SK-N-SH (cell line): ENCODE measurements at regions of chr7 and their contacts with region 1.

Region 1: DNA sequence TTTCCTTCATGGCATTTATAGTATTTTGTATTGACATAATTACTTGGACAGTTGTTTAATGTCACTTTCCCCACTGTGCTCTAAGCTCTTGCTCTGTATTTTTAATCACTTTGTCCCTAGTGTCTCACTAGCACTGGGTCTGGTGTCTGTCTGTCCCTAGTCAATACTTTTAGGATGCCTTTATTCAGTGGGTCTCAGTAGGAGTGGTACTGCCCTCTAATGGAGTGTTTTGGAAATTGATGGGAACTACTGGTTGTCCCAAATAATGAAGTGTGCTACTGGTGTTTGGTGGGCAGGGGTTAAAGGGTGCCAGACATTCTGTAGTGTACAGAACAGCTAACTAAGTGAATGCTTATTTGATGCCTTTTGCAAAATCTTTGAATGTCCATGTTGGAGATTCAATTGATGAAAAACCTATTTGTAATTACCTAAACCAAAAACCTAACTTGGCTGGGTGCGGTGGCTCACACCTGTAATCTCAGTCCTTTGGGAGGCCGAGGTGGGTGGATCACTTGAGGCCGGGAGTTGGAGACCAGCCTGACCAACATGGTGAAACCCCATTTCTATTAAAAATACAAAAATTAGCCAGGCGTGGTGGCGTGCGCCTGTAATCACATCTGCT is 33.3 kb downstream of the CDK14 start:
- DNase-seq: peak; percentile 68
- H3K4me3 ChIP-seq: no peak overlapping the region
- H3K27ac ChIP-seq: no peak overlapping the region
- H3K4me1 ChIP-seq: peaks cover 11 to 18% of the 10 kb centered on the region in 2 experiments
- H3K27me3 ChIP-seq: no peaks in the 10 kb centered on the region
- CTCF ChIP-seq: peak; percentile 84
- EP300 ChIP-seq: no peak
- RAD21 ChIP-seq: peak; percentile 94

Region 2: DNA sequence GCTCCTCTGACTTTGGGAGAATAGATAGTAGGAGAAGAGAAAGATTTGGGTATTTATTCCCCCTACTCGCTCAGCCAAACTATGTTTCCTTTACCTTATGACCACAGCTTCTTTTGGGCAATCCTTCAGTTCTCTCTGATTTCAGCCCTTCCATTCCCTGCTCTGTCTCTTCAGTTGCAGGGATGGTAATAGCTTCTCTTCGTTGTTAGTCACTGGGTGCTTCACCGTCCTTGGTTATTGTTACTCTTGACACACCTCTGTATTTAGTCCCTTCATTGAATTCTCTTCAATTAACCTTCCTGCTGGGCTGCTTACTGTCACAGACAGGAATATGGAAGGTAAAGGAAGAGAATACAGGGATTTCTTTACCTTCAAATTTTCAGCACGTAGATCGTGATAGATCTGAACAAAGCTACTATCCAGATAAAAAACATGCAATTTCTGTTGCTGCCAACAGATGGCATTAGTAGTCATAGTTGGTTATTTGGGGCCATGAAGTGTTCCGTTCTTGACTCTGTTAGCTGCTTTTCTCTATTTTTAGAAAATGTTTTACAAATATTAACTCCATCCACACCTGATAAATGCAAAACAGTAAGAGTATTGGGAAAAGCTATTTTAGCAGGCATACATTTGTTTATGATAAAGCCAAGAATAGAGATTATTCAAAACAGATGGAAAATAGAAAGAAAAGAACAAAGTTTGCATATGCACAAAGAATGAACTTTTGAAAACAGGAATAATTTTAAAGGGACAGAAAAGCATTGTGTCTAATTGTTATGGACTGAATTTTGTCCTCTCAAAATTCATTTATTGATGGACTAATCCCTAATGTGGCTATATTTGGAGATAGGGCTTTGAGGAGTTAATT is 174.0 kb before region 1 on chr7:
- CTCF ChIA-PET with region 1: interaction called, 27 read pairs
- POLR2A ChIA-PET with region 1: no interaction called
- DNase-seq: peak; percentile 61
- H3K4me3 ChIP-seq: peak overlapping the region; percentile 9 to 15; a peak in 1 of 4 replicates
- H3K27ac ChIP-seq: no peak overlapping the region
- H3K4me1 ChIP-seq: peaks cover 0 to 2% of the 10 kb centered on the region in 2 experiments; a peak in 1 of 4 replicates
- H3K27me3 ChIP-seq: no peaks in the 10 kb centered on the region
- CTCF ChIP-seq: peak; percentile 98
- EP300 ChIP-seq: no peak
- RAD21 ChIP-seq: peak; percentile 89

Region 3: DNA sequence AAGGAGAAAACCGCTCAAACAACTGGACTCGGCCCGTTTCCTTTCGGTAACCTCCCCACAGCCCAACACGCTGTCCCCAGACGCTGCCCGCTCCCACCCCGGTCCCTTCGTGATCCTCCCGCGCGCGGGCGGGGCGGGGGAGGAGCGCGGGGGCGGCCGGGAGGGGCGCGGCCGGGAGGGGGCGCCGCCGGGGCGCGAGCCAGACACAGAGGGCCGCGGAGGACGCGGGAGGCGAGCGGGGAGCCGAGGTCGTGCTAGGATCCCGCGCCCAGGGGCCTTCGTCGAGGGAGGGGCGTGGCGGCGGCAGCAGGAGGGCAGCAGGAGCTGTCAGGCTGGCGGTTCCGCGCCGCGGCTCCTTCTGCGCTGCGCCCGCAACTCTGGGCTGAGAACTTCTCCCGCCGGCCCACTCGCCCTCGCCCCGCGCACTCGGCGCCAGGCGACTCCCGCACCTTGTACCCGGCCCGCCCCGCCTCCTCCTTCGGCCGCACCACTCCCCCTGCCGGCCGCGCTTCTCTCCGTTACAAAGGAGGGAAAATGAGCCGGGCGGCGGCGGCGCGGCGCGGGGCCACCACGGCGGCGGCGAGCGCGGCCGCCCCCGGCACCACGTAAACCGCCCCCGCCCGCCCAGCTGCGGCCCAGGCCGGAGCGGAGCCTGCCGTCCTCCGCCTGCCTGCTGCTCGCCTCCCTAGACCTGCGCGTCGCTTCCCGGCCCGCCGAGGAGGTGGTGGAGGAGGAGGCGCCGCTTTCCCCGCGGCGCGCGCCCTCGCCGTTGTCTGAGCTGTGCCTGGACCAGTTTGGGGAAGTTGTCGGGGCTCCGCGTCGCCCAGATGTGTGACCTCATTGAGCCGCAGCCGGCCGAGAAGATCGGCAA is 33.4 kb before region 1 on chr7 and contains the start of gene CDK14:
- CTCF ChIA-PET with region 1: interaction called, 39 read pairs
- POLR2A ChIA-PET with region 1: no interaction called
- DNase-seq: peak; percentile 96
- H3K4me3 ChIP-seq: peak within 1 kb of the TSS; percentile 96 to 99
- H3K27ac ChIP-seq: peak within 1 kb of the TSS; percentile 81 to 85
- H3K4me1 ChIP-seq: peaks cover 21 to 32% of the 10 kb centered on the region in 2 experiments
- H3K27me3 ChIP-seq: no peaks in the 10 kb centered on the region
- CTCF ChIP-seq: peak; percentile 48
- EP300 ChIP-seq: peak in 1 of 2 experiments; percentile 44; a peak in 1 of 4 replicates
- RAD21 ChIP-seq: no peak
- polyA plus RNA-seq, gene CDK14: 13.9 and 15.6 TPM in 2 replicates

Region 4: DNA sequence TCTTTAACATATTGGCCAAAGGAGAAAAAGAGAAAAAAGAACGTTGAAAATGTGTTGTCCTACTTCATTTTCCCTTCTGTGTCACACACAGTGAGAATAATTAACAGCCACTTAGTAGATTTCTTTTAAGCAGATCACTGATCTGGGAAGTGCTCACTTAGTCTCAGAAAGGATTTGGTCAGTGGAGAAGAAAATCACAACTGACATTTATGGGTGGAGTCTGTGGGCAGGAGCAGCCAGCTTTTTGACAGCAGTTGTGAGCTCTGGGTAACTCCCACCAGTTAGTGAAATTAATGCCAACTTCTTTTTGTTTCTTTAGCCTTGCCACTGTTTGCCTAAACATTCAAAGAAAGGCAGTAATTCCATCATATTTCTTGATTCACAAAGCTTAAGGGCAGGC is 16.4 kb after region 1 on chr7:
- CTCF ChIA-PET with region 1: interaction called, 13 read pairs
- POLR2A ChIA-PET with region 1: no interaction called
- DNase-seq: no peak
- H3K4me3 ChIP-seq: no peak overlapping the region
- H3K27ac ChIP-seq: no peak overlapping the region
- H3K4me1 ChIP-seq: peaks cover 0 to 4% of the 10 kb centered on the region in 2 experiments; a peak in 2 of 4 replicates
- H3K27me3 ChIP-seq: no peaks in the 10 kb centered on the region
- CTCF ChIP-seq: no peak
- EP300 ChIP-seq: no peak
- RAD21 ChIP-seq: no peak

Region 5: DNA sequence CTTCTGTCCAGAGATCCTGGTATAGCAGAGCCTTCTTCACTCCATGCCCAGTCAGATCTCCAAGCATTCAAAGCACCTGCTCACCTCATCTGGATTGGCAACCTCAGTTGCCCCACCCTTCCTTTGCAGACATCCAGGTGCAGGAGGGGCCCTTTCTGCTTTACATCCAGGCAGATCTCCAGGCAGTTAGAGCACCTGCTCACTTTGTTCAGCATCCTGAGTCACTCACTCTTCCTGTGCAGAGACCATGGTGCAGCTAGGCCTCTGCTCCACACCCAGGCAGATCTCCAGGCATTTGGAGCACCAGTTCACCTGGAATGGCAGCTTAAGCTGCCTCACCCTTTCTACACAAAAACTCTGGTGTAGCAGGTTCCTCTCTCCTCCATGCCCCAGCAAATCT is 119.9 kb after region 1 on chr7:
- CTCF ChIA-PET with region 1: no interaction called
- POLR2A ChIA-PET with region 1: no interaction called
- DNase-seq: no peak
- H3K4me3 ChIP-seq: no peak overlapping the region
- H3K27ac ChIP-seq: no peak overlapping the region
- H3K4me1 ChIP-seq: peaks cover 0 to 3% of the 10 kb centered on the region in 2 experiments; a peak in 1 of 4 replicates
- H3K27me3 ChIP-seq: no peaks in the 10 kb centered on the region
- CTCF ChIP-seq: no peak
- EP300 ChIP-seq: no peak
- RAD21 ChIP-seq: no peak

Region 6: GRCh38 chr7:90892213-90892612 is 262.8 kb after region 1 on chr7:
- CTCF ChIA-PET with region 1: no interaction called
- POLR2A ChIA-PET with region 1: no interaction called
- DNase-seq: no peak
- H3K4me3 ChIP-seq: no peak overlapping the region
- H3K27ac ChIP-seq: no peak overlapping the region
- H3K4me1 ChIP-seq: peaks cover 0 to 2% of the 10 kb centered on the region in 2 experiments; a peak in 1 of 4 replicates
- H3K27me3 ChIP-seq: no peaks in the 10 kb centered on the region
- CTCF ChIP-seq: no peak
- EP300 ChIP-seq: no peak
- RAD21 ChIP-seq: no peak